A549 (cell line): ENCODE measurements at regions of chr2 and their contacts with region 1.

Region 1: GRCh38 chr2:205925373-205926337 is 160.3 kb downstream of the INO80D start:
- DNase-seq: peak; percentile 60 to 68
- ATAC-seq: peak; percentile 93 to 99
- H3K4me3 ChIP-seq: peak overlapping the region; percentile 19; the same call in 1 of the 3 replicates
- H3K27ac ChIP-seq: peak overlapping the region in 1 of 2 experiments; percentile 61; a peak in 1 of 6 replicates
- H3K4me1 ChIP-seq: 0 out of 3 replicates have a peak, but pooled peaks cover 2% of the 10 kb centered on the region
- CTCF ChIP-seq: peak; percentile 93
- EP300 ChIP-seq: no peak
- POLR2A ChIP-seq: no peak
- RAD21 ChIP-seq: peak; percentile 92 to 98

Region 2: GRCh38 chr2:204145263-204145751 is 1780.3 kb before region 1 on chr2:
- CTCF ChIA-PET with region 1: interaction called, 10 read pairs
- POLR2A ChIA-PET with region 1: no interaction called
- DNase-seq: peak; percentile 33 to 75
- ATAC-seq: peak; percentile 97 to 100
- H3K4me3 ChIP-seq: peak overlapping the region; percentile 45
- H3K27ac ChIP-seq: peak overlapping the region; percentile 35 to 57; a peak in 4 of 6 replicates
- H3K4me1 ChIP-seq: no peaks in the 10 kb centered on the region
- CTCF ChIP-seq: peak; percentile 96
- EP300 ChIP-seq: no peak
- POLR2A ChIP-seq: no peak
- RAD21 ChIP-seq: peak; percentile 92 to 93

Region 3: DNA sequence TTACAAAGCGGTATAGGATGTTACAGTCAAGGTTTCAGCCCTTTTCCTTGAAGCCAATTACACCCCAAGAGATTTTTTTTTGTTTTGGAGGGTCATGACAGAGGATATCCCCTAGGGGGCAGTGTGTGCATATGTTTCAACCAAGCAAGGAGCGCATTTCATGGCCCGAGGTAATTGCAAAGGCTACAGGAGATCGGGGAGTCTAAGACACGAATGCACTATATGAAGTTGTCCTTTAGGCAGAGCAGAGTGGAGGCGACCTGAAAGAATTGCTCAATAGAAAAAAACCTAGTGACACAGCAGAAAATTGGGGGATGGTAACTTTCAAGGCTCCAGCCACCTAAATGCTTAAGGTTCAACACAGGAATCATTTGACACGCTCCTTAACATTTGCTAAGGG is 1600.2 kb before region 1 on chr2:
- CTCF ChIA-PET with region 1: interaction called, 11 read pairs
- POLR2A ChIA-PET with region 1: no interaction called
- DNase-seq: peak; percentile 49 to 82
- ATAC-seq: peak; percentile 85 to 90
- H3K4me3 ChIP-seq: no peak overlapping the region
- H3K27ac ChIP-seq: 0 out of 6 replicates have a peak overlapping the region, but pooled peaks of 1 of the 2 experiments have one; percentile 38
- H3K4me1 ChIP-seq: peaks cover 16% of the 10 kb centered on the region; the same call in 2 of the 3 replicates
- CTCF ChIP-seq: peak; percentile 94
- EP300 ChIP-seq: no peak
- POLR2A ChIP-seq: no peak
- RAD21 ChIP-seq: peak; percentile 94 to 96

Region 4: DNA sequence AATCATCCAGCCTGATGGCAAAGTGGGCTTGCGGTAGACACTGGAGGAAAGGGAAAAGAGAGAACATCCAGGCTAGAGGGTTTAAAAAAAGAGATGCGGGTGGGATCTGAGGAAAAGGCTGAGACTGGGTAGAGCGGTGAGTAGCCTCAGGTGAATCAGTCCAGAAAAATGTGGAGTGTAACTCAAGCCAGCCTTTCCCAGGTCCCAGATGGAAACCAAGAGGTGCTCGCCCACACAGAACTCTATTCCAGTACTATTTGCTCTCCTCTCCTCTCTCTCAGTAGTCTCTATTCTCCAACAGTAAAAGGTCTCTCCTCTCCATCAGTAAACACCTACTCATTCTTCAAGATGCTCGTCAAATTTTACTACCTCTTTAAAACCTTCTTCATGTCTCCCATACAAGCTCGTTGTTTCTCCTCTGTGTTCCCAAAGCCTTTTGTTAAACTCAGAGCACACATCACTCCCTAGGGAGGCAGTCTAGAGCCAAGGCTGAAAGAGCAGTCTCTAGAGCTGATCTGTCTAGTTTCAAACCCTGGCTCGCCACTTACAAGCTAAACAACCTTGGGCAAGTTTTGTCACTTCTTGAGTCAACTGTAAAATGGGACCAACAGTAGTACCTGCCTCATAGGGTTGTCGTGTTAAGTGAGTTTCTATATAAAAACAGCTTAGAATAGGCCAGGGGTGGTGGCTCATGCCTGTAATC is 281.5 kb before region 1 on chr2:
- CTCF ChIA-PET with region 1: no interaction called
- POLR2A ChIA-PET with region 1: no interaction called
- DNase-seq: no peak
- ATAC-seq: no peak
- H3K4me3 ChIP-seq: no peak overlapping the region
- H3K27ac ChIP-seq: no peak overlapping the region
- H3K4me1 ChIP-seq: no peaks in the 10 kb centered on the region
- CTCF ChIP-seq: no peak
- EP300 ChIP-seq: no peak
- POLR2A ChIP-seq: no peak
- RAD21 ChIP-seq: no peak

Region 5: DNA sequence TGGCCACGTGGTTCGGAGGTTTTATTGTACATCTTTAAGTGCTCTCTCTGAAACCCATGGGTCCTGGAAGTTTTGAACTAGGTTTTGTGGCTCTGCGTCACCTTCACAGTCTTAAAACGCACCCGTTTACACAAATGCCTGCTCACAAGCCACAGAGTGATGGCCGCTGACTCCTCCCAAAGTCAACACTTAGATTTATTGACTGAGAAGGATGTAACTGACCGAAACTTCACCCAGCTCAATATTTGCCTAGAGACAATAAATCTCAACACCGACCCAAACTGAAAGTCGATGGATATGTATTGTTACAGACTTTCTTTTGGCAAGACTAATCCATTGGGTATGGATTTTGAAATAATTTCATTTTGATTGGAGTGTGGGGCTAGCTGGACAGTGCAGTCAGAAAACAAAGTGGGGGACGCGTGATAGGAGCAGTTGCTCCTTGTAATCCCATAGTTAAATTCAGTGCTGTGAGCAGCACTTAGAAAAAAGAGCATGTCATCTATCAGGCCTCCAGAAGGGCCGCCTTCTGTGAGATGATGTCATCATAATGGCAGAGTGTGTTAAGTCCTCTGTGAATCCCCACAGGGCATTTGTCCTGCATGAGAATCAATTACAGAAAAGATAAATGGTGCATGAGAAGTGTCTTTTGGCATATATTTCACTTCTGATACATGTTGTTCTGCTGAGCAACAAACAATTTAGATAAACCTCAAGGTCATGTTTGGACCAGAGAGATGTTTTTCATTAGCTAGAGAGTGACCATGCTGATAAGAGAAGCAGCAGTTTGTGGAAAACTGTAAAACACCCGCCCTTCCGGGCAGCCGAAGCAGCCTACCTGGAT is 23.4 kb before region 1 on chr2:
- CTCF ChIA-PET with region 1: interaction called, 44 read pairs
- POLR2A ChIA-PET with region 1: no interaction called
- DNase-seq: peak in 1 of 2 experiments; percentile 13
- ATAC-seq: peak in 1 of 2 experiments; percentile 51; a peak in 1 of 6 replicates
- H3K4me3 ChIP-seq: no peak overlapping the region
- H3K27ac ChIP-seq: no peak overlapping the region
- H3K4me1 ChIP-seq: no peaks in the 10 kb centered on the region
- CTCF ChIP-seq: no peak
- EP300 ChIP-seq: no peak
- POLR2A ChIP-seq: no peak
- RAD21 ChIP-seq: no peak

Region 6: GRCh38 chr2:205915130-205915524 is 10.5 kb before region 1 on chr2:
- CTCF ChIA-PET with region 1: interaction called, 44 read pairs
- POLR2A ChIA-PET with region 1: no interaction called
- DNase-seq: no peak
- ATAC-seq: no peak
- H3K4me3 ChIP-seq: no peak overlapping the region
- H3K27ac ChIP-seq: no peak overlapping the region
- H3K4me1 ChIP-seq: no peaks in the 10 kb centered on the region
- CTCF ChIP-seq: no peak
- EP300 ChIP-seq: no peak
- POLR2A ChIP-seq: no peak
- RAD21 ChIP-seq: no peak